Right ventricle myocardium inferior (tissue), 1 donor: ENCODE measurements at regions of chr15 and their contacts with region 1.

Region 1: GRCh38 chr15:36709653-36710052 is 130.2 kb downstream of the CDIN1 start:
- DNase-seq: no peak
- ATAC-seq: no peak

Region 2: DNA sequence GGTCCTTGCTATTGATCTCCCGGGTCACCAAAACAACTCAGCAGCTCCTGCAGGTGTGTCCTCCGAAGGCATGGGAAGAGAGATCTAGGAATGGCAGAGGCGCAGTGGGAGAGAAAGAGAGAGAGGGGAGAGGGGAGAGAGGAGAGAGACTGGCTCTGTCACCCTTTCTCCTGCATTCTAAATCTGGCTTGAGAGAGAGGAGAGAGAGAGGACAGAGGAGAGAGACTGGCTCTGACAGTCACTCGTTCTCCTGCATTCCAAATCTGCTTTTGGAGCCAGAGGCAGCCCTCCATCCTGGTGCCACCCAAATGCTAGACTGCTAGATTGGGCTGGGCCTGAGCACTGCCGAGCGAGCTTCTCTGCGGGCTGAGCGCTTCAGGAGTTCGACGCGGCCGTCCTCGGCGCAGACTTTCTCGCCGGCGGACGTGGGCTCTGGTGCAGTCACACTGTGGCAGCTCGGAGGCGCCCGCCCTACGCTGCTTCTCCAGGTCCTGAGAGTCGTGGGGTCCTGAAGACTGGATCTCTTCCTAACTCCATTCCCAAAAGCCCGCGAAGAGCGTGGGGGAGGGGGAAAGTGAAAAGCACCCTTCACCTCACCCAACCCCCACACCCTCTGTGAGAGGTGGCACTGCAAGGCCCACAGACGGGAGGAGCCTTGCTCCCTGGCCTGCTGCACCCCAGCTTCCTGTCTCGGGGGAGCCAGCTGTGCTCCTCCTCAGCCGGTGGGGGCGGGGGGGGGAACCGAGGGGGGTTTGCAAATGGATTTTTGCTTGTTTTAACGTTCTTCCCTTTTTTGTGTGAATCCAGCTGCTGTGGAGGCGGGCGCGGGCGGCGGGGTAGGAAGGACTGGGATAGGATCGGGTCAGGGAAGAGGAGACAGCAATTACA is 168.4 kb after region 1 on chr15:
- intact Hi-C with region 1: loop called (anchors 10 kb)
- DNase-seq: no peak
- ATAC-seq: peak; percentile 61